Activated CD4-positive, alpha-beta memory T cell treated with anti-CD3 and anti-CD28 coated beads for 36 hours (primary cell): ENCODE measurements at regions of chr6 and their contacts with region 1.

Region 1: DNA sequence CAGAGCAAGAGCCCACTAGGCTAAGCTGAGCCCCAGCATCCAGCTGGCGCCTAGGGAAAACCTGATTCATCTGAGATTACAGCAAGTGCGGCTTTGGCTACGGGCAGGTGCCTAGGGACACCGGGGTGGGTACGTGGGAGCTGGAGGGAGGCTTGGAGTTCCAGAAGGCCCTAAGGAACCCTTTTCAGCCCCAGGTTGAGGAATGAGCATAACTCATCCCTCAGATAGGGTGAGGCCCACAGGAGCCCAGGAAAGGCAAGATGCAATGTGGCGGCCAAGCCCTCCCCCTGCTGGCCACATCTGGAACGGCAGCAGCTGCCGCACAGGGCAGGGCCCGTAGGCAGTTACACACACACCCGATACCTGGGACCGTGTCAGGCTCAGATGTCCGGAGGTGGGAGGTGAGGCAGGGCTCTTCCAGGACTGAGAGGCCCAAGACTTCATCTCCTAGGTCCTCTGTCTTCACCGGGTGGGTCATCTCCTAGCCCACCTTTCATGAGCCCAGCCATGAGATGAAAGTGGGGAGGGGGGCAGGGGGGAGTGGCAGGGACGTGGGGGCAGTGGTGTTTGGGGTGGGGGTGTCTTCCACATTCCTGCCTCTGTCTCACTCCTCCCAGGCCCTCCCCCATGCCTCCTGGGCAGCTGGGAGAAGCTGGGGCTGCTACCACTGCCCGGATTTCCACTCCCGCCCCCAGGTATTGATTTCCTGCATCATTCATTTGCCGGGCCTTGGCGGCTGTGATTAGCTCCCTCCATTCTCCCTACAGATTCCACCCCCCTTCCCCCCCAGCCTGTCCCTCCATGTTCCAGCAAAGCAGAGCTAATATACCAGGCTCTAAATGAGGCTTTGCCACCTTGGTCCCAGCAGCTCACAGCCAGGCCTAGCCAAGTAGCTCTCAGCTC is 5.5 kb downstream of the MDGA1 start:
- DNase-seq: peak; percentile 88
- H3K4me3 Mint-ChIP-seq: no peak overlapping the region
- H3K27ac Mint-ChIP-seq: no peak overlapping the region
- H3K4me1 Mint-ChIP-seq: peaks cover 21% of the 10 kb centered on the region
- H3K27me3 Mint-ChIP-seq: peaks cover 6% of the 10 kb centered on the region

Region 2: GRCh38 chr6:35920793-35921732 is 1771.1 kb before region 1 on chr6 and contains the start of gene SRPK1:
- CTCF ChIA-PET with region 1: no interaction called
- POLR2A ChIA-PET with region 1: no interaction called
- intact Hi-C with region 1: no loop called
- DNase-seq: peak; percentile 94
- H3K4me3 Mint-ChIP-seq: peak within 1 kb of the TSS; percentile 86
- H3K27ac Mint-ChIP-seq: peak within 1 kb of the TSS; percentile 96
- H3K4me1 Mint-ChIP-seq: peaks cover 41% of the 10 kb centered on the region
- H3K27me3 Mint-ChIP-seq: no peaks in the 10 kb centered on the region
- total RNA-seq, gene SRPK1: 134 to 143 TPM

Region 3: DNA sequence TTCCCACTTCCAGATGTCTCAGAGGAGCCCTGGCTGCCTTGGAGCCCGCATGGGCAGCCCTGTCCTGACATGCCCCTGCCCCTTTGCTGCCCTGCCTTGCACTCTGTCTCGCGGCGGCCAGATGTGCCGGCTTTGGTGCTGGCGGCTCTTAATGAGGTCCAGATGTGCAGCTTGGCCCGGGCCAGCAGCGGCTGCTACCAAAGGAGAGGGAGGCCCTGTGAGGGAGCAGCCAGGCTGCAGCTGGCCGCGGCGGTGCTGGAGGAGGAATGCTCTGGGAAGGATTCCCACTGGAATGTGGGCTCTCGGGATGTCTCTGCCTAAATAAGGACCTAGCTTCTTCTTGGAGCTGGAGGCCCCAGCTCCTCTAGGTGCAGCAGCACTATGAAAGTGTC is 614.3 kb before region 1 on chr6:
- CTCF ChIA-PET with region 1: no interaction called
- POLR2A ChIA-PET with region 1: no interaction called
- intact Hi-C with region 1: no loop called
- DNase-seq: no peak
- H3K4me3 Mint-ChIP-seq: no peak overlapping the region
- H3K27ac Mint-ChIP-seq: no peak overlapping the region
- H3K4me1 Mint-ChIP-seq: peaks cover 2% of the 10 kb centered on the region
- H3K27me3 Mint-ChIP-seq: no peaks in the 10 kb centered on the region

Region 4: DNA sequence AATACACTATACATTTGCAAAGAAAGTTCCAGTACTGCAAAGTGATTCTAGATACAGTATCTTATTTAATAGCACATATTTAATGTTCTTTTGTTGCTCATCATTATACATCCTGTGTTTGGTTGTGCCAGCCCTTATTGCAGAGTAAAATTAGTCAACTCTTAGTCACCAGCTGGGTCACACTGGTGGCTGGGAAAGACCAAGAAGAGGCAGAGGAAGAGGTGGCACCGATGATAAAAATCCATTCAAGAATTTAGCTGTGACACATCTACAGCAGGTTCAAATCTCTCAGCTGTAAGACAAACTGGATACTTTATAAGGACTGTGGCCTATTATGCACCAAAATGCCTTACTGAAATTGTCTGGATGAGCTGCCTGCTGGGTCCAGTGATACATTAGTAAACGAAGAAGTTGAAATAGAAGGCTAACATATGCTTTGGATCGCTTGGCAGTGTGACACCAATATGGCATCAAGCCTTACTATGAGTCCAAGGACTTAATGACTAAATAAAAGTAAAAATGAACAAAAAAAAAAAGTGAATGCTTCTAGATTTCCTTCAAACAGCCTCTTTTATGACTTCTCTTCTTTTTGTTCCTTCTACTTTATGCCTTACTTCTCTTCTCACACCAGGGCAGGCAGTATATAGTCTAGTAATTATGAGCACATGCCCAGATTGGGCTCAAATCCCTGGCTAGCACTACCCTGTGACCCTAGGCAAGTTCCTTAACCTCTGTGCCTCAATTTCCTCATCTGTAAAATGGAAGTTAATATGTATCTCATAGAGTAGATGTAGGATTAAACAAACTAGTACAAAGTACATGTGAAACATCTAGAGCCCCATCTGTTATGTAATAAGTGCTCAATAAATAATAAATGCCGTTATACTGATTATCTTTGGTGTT is 367.8 kb before region 1 on chr6:
- CTCF ChIA-PET with region 1: interaction called, 28 read pairs
- POLR2A ChIA-PET with region 1: no interaction called
- intact Hi-C with region 1: loop called (anchors 1 kb)
- DNase-seq: peak; percentile 67
- H3K4me3 Mint-ChIP-seq: no peak overlapping the region
- H3K27ac Mint-ChIP-seq: no peak overlapping the region
- H3K4me1 Mint-ChIP-seq: peaks cover 22% of the 10 kb centered on the region
- H3K27me3 Mint-ChIP-seq: no peaks in the 10 kb centered on the region

Region 5: DNA sequence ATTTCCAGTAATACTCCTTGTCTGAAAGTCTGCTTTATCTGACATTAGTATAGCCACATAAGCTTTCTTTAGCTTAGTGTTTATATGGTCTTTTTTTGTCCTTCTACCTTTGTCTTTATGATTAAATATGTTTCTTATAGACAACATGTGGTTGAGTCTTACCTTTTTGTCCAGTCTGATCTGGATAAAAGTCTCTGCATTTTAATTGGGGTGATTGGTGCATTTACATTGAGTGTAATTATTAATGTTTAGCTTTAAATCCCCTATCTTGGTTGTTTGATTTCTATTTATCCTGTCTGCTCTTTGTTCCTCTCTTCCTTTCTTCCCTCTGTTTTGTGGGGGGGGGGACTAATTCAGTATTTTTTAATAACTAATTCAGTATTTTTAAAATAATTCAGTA is 224.4 kb before region 1 on chr6:
- CTCF ChIA-PET with region 1: interaction called, 12 read pairs
- POLR2A ChIA-PET with region 1: no interaction called
- intact Hi-C with region 1: no loop called
- DNase-seq: no peak
- H3K4me3 Mint-ChIP-seq: no peak overlapping the region
- H3K27ac Mint-ChIP-seq: no peak overlapping the region
- H3K4me1 Mint-ChIP-seq: no peaks in the 10 kb centered on the region
- H3K27me3 Mint-ChIP-seq: no peaks in the 10 kb centered on the region

Region 6: GRCh38 chr6:37489660-37490361 is 202.3 kb before region 1 on chr6:
- CTCF ChIA-PET with region 1: interaction called, 15 read pairs
- POLR2A ChIA-PET with region 1: interaction called, 3 read pairs
- intact Hi-C with region 1: loop called (anchors 5 kb)
- DNase-seq: peak; percentile 51
- H3K4me3 Mint-ChIP-seq: no peak overlapping the region
- H3K27ac Mint-ChIP-seq: peak overlapping the region; percentile 76
- H3K4me1 Mint-ChIP-seq: peaks cover 70% of the 10 kb centered on the region
- H3K27me3 Mint-ChIP-seq: no peaks in the 10 kb centered on the region

Region 7: DNA sequence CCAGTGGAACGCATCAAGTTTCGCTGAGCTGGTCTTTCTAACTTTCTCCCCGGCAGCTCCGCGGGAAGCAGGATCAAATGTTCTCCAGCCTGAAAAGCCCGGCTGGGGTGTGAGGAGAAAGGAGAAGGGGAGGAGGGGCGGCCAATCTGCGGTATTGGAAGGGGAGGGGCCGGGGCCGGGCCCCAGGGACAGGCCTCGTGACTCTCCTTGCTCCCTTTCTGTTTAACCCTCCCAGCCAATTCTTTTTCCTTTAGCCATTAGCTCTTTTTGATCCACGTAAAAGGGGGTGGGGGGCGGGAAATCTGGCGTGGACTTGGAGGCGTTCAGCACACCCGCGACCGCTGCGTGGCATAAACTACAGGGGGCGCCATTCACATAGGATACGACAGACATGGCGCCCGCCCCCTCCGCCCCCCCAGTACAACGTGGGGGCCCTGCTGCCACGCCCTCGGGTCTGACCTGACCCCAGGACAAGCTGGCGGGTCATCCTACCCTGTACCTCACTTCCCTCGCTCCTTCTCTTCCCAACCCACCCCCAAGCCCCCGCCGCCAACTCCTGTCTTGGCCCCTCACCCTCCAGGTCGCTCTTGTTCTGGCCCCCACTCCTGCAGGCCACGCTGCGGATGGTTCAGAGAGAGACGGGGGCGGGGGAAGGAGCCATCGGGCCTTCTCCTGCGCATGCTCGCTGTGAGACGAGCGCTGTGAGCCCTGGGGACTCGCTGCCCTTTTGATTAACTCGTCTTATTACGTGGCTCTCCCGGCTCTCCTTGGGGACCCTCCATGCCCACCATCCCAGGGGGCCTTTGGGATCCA is 13.3 kb after region 1 on chr6:
- CTCF ChIA-PET with region 1: interaction called, 16 read pairs
- POLR2A ChIA-PET with region 1: no interaction called
- intact Hi-C with region 1: no loop called
- DNase-seq: peak; percentile 83
- H3K4me3 Mint-ChIP-seq: peak overlapping the region; percentile 66
- H3K27ac Mint-ChIP-seq: peak overlapping the region; percentile 60
- H3K4me1 Mint-ChIP-seq: peaks cover 9% of the 10 kb centered on the region
- H3K27me3 Mint-ChIP-seq: no peaks in the 10 kb centered on the region